ENCODE measurements at regions of chr3 and their contacts with region 1.

Region 1: DNA sequence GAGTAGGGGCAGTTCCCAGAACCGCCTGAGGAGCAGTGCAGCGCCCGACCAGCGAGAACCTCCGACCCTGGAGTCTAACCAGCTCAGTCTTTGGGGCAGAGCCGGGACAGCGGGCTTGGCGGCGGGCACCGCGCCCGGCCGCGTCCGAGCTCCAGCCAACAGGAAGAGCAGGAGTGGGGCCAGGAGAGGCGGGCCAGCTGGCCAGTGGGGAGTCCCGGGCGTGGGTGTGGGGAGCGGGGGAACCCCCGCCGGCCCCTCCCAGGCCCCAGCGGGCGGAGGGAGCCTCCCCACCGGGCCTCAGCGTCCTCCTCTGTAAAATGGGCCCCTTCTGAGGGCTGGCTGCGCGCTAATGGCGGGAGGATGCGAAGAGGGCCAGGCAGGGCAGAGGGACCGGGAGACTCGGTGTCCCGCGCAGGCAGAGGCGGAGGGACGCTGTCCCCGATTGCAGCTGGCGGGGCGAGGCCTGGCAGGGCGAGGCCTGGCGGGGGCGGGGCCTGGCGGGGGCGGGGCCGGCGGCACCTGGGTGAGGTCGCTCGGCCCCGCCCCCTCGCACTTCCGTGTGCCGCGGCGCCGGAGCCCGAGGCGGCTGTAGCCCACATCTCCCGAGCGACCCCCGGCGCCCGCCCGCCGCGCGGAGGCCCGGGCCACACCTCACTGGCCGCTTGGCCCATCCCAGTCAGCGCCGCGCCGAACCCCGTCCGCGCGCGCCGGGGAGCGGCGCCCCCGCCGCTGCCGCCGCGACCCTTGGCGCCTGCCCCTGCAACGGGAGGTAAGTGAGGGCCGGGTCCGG is at the start of gene PRKCD:
- DNase-seq: no peak
- ATAC-seq: peak; percentile 74
- H3K4me3 ChIP-seq: peak within 1 kb of the TSS; percentile 97
- H3K27ac ChIP-seq: peak within 1 kb of the TSS; percentile 92
- H3K4me1 ChIP-seq: peaks cover 45% of the 10 kb centered on the region
- H3K27me3 ChIP-seq: no peaks in the 10 kb centered on the region; a peak in 1 of 4 replicates
- CTCF ChIP-seq: peak; percentile 30 to 65 (median 49)
- EP300 ChIP-seq: no peak
- POLR2A ChIP-seq: peak; percentile 78
- RAD21 ChIP-seq: peak; percentile 13; the same call in 1 of the 2 replicates
- polyA plus RNA-seq, gene PRKCD: 13.2 to 22.1 TPM

Region 2: GRCh38 chr3:52536369-52537164 is 624.3 kb before region 1 on chr3 and contains the start of gene UQCC5:
- CTCF ChIA-PET with region 1: no interaction called
- POLR2A ChIA-PET with region 1: no interaction called
- RAD21 ChIA-PET with region 1: no interaction called
- SMC1A ChIA-PET with region 1: no interaction called
- in situ Hi-C with region 1: no loop called
- intact Hi-C with region 1: loop called (anchors 5 kb)
- DNase-seq: peak; percentile 95
- ATAC-seq: peak; percentile 91
- H3K4me3 ChIP-seq: peak within 1 kb of the TSS; percentile 95
- H3K27ac ChIP-seq: peak within 1 kb of the TSS; percentile 84
- H3K4me1 ChIP-seq: peaks cover 15% of the 10 kb centered on the region
- H3K27me3 ChIP-seq: no peaks in the 10 kb centered on the region
- CTCF ChIP-seq: peak in 1 of 3 experiments; percentile 22; a peak in 1 of 6 replicates
- EP300 ChIP-seq: no peak
- POLR2A ChIP-seq: peak; percentile 100
- RAD21 ChIP-seq: no peak
- polyA plus RNA-seq, gene UQCC5: 38.4 to 56.8 TPM

Region 3: DNA sequence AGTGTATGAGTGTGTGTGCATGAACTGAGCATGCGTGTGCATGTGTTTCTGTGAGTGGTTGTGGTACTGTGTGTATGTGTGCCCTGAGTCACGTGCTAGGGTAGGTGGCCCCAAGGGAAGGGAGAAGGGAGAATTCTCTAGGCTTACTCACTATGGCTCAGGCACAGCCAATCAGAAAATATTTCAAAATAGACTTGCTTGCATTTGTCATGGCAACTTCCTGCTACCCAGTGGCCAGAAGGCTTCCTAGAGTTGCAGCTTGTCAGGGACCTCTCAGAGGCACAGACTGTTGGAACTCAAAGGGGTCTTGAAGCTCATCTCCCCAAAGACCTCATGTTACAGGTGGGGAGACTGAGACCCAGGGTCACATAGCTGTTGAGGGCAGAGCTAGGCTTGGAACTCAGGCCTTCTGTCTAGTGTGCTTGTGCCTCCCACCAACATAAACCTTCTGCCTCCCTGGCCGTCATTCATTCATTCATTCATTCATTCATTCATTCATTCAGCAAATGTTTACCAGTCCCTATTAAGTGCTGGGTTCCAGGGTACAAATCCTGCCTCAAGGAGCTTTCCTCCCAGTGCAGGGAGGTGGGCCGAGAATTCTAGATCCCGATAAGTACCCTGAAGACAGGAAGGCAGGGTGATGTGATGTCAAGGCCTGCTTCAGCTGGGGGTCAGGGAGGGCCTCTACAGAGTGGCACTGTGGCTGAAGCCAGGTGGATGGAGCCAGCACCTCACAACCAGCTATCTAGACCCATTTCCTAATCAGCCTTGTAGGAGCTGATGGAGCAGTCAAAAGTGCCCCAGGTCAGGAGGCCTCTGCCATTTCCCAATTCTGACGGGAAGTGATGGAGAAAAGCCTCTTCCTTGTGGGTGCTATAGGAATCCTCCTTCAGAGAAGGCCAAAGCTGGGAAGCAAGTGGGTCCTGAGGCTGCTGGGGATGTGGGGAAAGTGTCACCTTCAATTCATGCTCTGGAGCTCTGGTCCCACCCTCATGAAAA is 19.7 kb before region 1 on chr3:
- CTCF ChIA-PET with region 1: interaction called, 32 read pairs
- POLR2A ChIA-PET with region 1: interaction called, 20 read pairs
- RAD21 ChIA-PET with region 1: interaction called, 7 read pairs
- SMC1A ChIA-PET with region 1: interaction called, 5 read pairs
- in situ Hi-C with region 1: no loop called
- intact Hi-C with region 1: no loop called
- DNase-seq: no peak
- ATAC-seq: peak; percentile 43
- H3K4me3 ChIP-seq: no peak overlapping the region
- H3K27ac ChIP-seq: no peak overlapping the region
- H3K4me1 ChIP-seq: peaks cover 13% of the 10 kb centered on the region
- H3K27me3 ChIP-seq: no peaks in the 10 kb centered on the region
- CTCF ChIP-seq: no peak
- EP300 ChIP-seq: no peak
- POLR2A ChIP-seq: no peak
- RAD21 ChIP-seq: no peak

Region 4: GRCh38 chr3:53150247-53151085 is 10.4 kb before region 1 on chr3:
- CTCF ChIA-PET with region 1: interaction called, 3 read pairs
- POLR2A ChIA-PET with region 1: interaction called, 20 read pairs
- RAD21 ChIA-PET with region 1: interaction called, 8 read pairs
- SMC1A ChIA-PET with region 1: interaction called, 5 read pairs
- in situ Hi-C with region 1: no loop called
- intact Hi-C with region 1: no loop called
- DNase-seq: no peak
- ATAC-seq: no peak
- H3K4me3 ChIP-seq: no peak overlapping the region
- H3K27ac ChIP-seq: no peak overlapping the region
- H3K4me1 ChIP-seq: no peaks in the 10 kb centered on the region
- H3K27me3 ChIP-seq: no peaks in the 10 kb centered on the region; a peak in 1 of 4 replicates
- CTCF ChIP-seq: no peak
- EP300 ChIP-seq: no peak
- POLR2A ChIP-seq: no peak
- RAD21 ChIP-seq: no peak

Region 5: DNA sequence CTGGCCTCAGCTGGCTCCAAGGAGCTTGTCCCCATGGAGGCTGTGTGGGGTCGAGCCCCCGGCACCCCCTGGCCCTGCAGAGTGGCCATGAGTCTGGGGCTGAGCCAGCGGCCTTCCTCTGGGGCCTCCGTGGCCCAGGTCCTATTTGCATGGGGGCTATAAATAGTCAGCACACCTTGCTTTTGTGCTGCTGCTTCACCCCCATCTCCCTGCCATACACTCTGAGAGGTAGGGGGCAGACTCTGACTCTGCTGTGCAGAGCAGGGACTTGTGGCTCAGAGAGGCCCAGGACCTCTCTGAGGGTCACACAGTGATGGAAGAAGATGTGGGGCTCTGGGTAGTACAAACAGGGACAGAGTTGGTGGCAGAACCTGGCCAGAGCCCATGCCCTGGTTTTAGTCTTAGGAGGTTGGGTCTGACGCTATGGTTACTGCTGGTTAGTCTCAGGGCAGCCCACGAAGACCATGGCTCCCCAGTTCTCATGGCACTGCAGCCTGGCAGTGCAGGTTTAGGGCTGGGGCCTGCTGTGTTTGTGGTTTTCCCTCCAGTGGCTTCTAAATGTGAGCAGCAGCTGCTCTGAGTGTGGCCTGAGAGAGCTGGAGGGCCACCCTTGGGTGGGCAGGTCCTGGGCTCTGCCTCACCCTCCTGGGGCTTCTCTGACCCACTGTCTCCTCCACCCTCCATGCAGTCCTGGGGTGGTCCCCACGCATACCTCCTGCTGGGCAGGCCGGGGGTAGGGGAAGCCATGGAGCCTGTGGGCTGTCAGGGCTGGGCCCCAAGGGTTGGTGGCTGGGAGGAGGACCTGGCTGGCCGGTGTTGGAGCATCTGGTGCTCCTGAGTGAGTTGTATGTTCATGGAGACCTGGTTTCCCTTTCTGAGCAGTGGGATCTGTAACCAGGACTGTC is 13.7 kb after region 1 on chr3:
- CTCF ChIA-PET with region 1: interaction called, 17 read pairs
- POLR2A ChIA-PET with region 1: interaction called, 32 read pairs
- RAD21 ChIA-PET with region 1: interaction called, 12 read pairs
- SMC1A ChIA-PET with region 1: interaction called, 21 read pairs
- in situ Hi-C with region 1: no loop called
- intact Hi-C with region 1: no loop called
- DNase-seq: no peak
- ATAC-seq: peak; percentile 36
- H3K4me3 ChIP-seq: peak overlapping the region; percentile 52
- H3K27ac ChIP-seq: peak overlapping the region; percentile 64
- H3K4me1 ChIP-seq: peaks cover 83% of the 10 kb centered on the region
- H3K27me3 ChIP-seq: no peaks in the 10 kb centered on the region
- CTCF ChIP-seq: peak; percentile 20 to 45 (median 34); a peak in 5 of 6 replicates
- EP300 ChIP-seq: no peak
- POLR2A ChIP-seq: peak; percentile 22
- RAD21 ChIP-seq: peak; percentile 65

Region 6: DNA sequence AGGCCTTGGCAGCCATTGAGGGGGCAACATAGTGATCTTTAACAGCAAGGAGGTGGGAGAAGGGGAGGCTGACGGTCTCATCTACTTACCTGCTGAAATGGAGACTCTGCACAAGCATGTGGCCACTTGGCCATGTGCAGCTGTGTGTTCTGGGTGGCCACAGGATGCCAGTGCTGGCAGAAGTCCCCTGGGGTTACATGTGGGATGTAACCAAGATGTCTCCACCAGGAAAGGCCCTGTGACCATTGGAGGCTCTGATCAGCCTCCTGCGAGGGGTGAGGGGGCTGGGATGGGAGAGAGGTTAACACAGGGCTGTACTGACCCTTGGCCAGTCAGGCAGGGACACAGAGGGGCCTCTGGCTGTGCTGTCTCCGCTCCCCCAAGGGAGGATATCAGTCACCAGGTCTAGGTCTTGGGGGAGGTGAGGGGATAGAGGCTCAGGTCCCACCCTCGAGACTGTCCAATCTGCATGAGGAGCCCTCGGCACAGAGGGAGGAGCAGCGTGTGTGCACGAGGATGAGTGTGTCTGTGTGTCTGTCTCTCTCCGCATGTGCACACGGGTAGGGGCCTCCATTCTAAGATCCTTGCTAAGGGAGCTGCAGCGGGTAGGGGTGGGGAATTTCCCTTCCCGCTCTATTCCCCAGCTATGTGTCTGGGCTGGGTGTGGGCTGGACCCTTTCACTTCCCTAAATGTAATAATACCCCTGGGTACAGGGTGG is 19.6 kb after region 1 on chr3:
- CTCF ChIA-PET with region 1: interaction called, 4 read pairs
- POLR2A ChIA-PET with region 1: interaction called, 13 read pairs
- RAD21 ChIA-PET with region 1: interaction called, 12 read pairs
- SMC1A ChIA-PET with region 1: interaction called, 21 read pairs
- in situ Hi-C with region 1: no loop called
- intact Hi-C with region 1: loop called (anchors 1 kb)
- DNase-seq: peak; percentile 84
- ATAC-seq: peak; percentile 97
- H3K4me3 ChIP-seq: peak overlapping the region; percentile 19; the same call in 1 of the 2 replicates
- H3K27ac ChIP-seq: peak overlapping the region; percentile 93
- H3K4me1 ChIP-seq: peaks cover 47% of the 10 kb centered on the region
- H3K27me3 ChIP-seq: no peaks in the 10 kb centered on the region
- CTCF ChIP-seq: no peak
- EP300 ChIP-seq: peak; percentile 56 to 88; a peak in 2 of 4 replicates
- POLR2A ChIP-seq: peak; percentile 63
- RAD21 ChIP-seq: no peak

Measured in GM12878 (cell line).